Spleen (tissue), 13 donors: ENCODE measurements at regions of chr22 and their contacts with region 1.

Region 1: GRCh38 chr22:25465949-25466348 is 98.5 kb upstream of the GRK3 start:
- DNase-seq: no peak
- H3K4me3 ChIP-seq: no peak overlapping the region
- H3K27ac ChIP-seq: no peak overlapping the region
- H3K4me1 ChIP-seq: peaks cover 0 to 7% (median 5%) of the 10 kb centered on the region in 6 donors
- H3K27me3 ChIP-seq: no peaks in the 10 kb centered on the region
- CTCF ChIP-seq: no peak
- POLR2A ChIP-seq: no peak

Region 2: DNA sequence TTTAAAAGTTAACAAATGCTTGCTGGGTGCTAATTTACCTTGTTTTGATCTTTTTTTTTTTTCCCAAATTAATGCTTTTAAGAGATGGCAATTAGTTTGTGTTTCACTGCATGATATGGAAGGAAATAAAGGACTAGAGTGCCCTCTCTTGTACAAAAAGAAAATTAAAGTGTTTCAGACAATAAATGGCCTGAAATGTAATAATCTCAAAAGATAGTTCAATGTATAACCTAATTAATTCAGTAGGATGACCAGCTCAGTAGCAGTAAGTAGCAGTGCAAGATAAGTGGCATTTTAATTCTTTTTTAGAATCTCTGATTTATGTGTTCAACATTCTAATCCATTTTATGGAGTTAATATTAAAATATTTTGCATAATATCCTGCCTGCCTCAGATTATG is 236.1 kb after region 1 on chr22:
- intact Hi-C with region 1: loop called (anchors 10 kb)
- DNase-seq: no peak
- H3K4me3 ChIP-seq: no peak overlapping the region
- H3K27ac ChIP-seq: no peak overlapping the region
- H3K4me1 ChIP-seq: peaks cover 0 to 20% (median 4%) of the 10 kb centered on the region in 6 donors
- H3K27me3 ChIP-seq: no peaks in the 10 kb centered on the region
- CTCF ChIP-seq: peak in 8 of 11 experiments; percentile 17 to 50 (median 30)
- POLR2A ChIP-seq: no peak

Region 3: GRCh38 chr22:25774575-25775026 is 308.7 kb after region 1 on chr22:
- intact Hi-C with region 1: loop called (anchors 5 kb)
- DNase-seq: no peak
- H3K4me3 ChIP-seq: no peak overlapping the region
- H3K27ac ChIP-seq: no peak overlapping the region
- H3K4me1 ChIP-seq: peaks cover 0 to 7% (median 5%) of the 10 kb centered on the region in 6 donors
- H3K27me3 ChIP-seq: peaks cover 0 to 15% (median 0%) of the 10 kb centered on the region in 7 donors
- CTCF ChIP-seq: peak in 6 of 11 experiments; percentile 34 to 53 (median 37)
- POLR2A ChIP-seq: no peak

Region 4: GRCh38 chr22:26330966-26331625 is 865.1 kb after region 1 on chr22:
- intact Hi-C with region 1: loop called (anchors 10 kb)
- DNase-seq: no peak
- H3K4me3 ChIP-seq: no peak overlapping the region
- H3K27ac ChIP-seq: no peak overlapping the region
- H3K4me1 ChIP-seq: no peaks in the 10 kb centered on the region
- H3K27me3 ChIP-seq: peaks cover 0 to 49% (median 0%) of the 10 kb centered on the region in 7 donors
- CTCF ChIP-seq: peak; percentile 46 to 85 (median 71)
- POLR2A ChIP-seq: no peak